AG04449 (cell line): ENCODE measurements at regions of chr6 and their contacts with region 1.

Region 1: GRCh38 chr6:32413427-32414047 is 6.6 kb upstream of the BTNL2 start:
- DNase-seq: peak; percentile 38
- H3K4me3 ChIP-seq: no peak overlapping the region
- CTCF ChIP-seq: peak; percentile 97

Region 2: GRCh38 chr6:32367641-32368040 is 45.9 kb before region 1 on chr6:
- CTCF ChIA-PET with region 1: no interaction called
- POLR2A ChIA-PET with region 1: no interaction called
- DNase-seq: no peak
- H3K4me3 ChIP-seq: no peak overlapping the region
- CTCF ChIP-seq: no peak

Region 3: DNA sequence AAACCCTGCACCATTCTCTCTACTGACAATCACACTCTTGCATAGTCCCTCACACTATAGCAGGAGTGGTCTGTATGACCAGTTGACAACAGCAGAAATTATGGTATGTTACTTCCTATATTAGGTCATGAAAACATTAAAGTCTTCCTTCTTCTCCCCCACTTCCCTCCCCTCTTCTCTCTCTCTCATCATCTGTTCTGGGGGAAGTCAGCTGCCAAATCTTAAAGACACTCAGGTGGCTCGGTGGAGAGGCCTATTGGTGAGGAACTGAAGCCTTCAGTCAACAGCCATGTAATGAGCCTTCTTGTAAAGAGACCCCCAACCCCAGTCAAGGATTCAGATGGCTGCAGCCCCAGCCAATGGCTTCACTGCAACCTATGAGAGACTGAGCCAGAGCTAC is 30.8 kb before region 1 on chr6:
- CTCF ChIA-PET with region 1: interaction called, 14 read pairs
- POLR2A ChIA-PET with region 1: no interaction called
- DNase-seq: no peak
- H3K4me3 ChIP-seq: no peak overlapping the region
- CTCF ChIP-seq: no peak

Region 4: GRCh38 chr6:32424589-32425300 is 11.2 kb after region 1 on chr6:
- CTCF ChIA-PET with region 1: interaction called, 64 read pairs
- POLR2A ChIA-PET with region 1: no interaction called
- DNase-seq: no peak
- H3K4me3 ChIP-seq: no peak overlapping the region
- CTCF ChIP-seq: no peak

Region 5: GRCh38 chr6:32785781-32786533 is 372.4 kb after region 1 on chr6:
- CTCF ChIA-PET with region 1: interaction called, 172 read pairs
- POLR2A ChIA-PET with region 1: no interaction called
- DNase-seq: no peak
- H3K4me3 ChIP-seq: no peak overlapping the region
- CTCF ChIP-seq: peak; percentile 55